Ovary (tissue), 10 donors: ENCODE measurements at regions of chr3 and their contacts with region 1.

Region 1: GRCh38 chr3:89000886-89001285 is 106.5 kb upstream of the EPHA3 start:
- DNase-seq: no peak
- H3K4me3 ChIP-seq: no peak overlapping the region
- H3K27ac ChIP-seq: no peak overlapping the region
- H3K4me1 ChIP-seq: no peaks in the 10 kb centered on the region
- H3K27me3 ChIP-seq: no peaks in the 10 kb centered on the region
- CTCF ChIP-seq: no peak
- EP300 ChIP-seq: no peak
- POLR2A ChIP-seq: no peak

Region 2: DNA sequence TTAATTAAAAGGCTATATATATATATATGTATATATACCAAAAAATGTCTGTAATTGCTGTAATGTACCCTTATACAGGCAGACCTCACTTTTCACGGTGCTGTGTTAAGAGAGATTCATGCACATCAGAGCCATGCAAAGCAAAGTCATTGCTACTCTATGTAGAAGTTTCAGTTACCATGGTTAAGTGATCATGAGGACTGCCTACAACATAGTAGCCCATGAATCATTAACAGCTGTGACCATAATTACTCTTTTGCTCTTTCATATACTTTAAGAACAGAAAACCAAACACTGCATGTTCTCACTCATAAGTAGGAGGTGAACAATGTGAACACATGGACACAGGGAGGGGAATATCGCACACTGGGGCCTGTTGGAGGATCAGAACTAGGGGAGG is 118.8 kb before region 1 on chr3:
- intact Hi-C with region 1: no loop called
- DNase-seq: no peak
- H3K4me3 ChIP-seq: no peak overlapping the region
- H3K27ac ChIP-seq: no peak overlapping the region
- H3K4me1 ChIP-seq: no peaks in the 10 kb centered on the region
- H3K27me3 ChIP-seq: no peaks in the 10 kb centered on the region
- CTCF ChIP-seq: no peak
- EP300 ChIP-seq: no peak
- POLR2A ChIP-seq: no peak

Region 3: GRCh38 chr3:89013536-89013935 is 12.7 kb after region 1 on chr3:
- intact Hi-C with region 1: loop called in 1 of 4 experiments (anchors 2 kb)
- DNase-seq: no peak
- H3K4me3 ChIP-seq: no peak overlapping the region
- H3K27ac ChIP-seq: no peak overlapping the region
- H3K4me1 ChIP-seq: no peaks in the 10 kb centered on the region
- H3K27me3 ChIP-seq: no peaks in the 10 kb centered on the region
- CTCF ChIP-seq: no peak
- EP300 ChIP-seq: no peak
- POLR2A ChIP-seq: no peak